Transverse colon (tissue), 4 donors: ENCODE measurements at regions of chr15 and their contacts with region 1.

Region 1: GRCh38 chr15:25022233-25022632 is 67.4 kb downstream of the SNRPN start:
- DNase-seq: no peak
- H3K4me3 ChIP-seq: no peak overlapping the region
- H3K27ac ChIP-seq: no peak overlapping the region
- H3K4me1 ChIP-seq: no peaks in the 10 kb centered on the region
- H3K27me3 ChIP-seq: no peaks in the 10 kb centered on the region
- CTCF ChIP-seq: no peak
- EP300 ChIP-seq: no peak
- POLR2A ChIP-seq: no peak

Region 2: DNA sequence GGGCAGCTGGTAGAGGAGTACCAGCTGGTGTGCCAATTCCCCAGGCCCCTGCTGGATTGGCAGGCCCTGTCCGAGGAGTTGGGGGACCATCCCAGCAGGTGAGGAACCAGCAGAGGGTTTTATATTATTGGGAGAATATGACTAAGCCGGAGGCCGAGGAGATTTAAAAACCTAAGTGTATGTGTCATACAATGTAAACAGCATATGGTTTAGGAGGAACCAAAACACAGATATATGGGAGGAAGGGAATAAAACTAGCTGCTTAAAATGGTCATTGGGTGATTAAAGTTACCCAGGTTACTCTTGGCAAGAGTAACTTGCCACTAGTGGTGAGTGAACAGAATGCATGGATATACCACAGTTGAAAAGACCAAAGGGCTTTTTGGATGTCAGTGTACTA is 45.3 kb before region 1 on chr15:
- in situ Hi-C with region 1: no loop called
- intact Hi-C with region 1: loop called (anchors 10 kb)
- DNase-seq: no peak
- H3K4me3 ChIP-seq: no peak overlapping the region
- H3K27ac ChIP-seq: no peak overlapping the region
- H3K4me1 ChIP-seq: no peaks in the 10 kb centered on the region
- H3K27me3 ChIP-seq: no peaks in the 10 kb centered on the region
- CTCF ChIP-seq: no peak
- EP300 ChIP-seq: no peak
- POLR2A ChIP-seq: no peak

Region 3: DNA sequence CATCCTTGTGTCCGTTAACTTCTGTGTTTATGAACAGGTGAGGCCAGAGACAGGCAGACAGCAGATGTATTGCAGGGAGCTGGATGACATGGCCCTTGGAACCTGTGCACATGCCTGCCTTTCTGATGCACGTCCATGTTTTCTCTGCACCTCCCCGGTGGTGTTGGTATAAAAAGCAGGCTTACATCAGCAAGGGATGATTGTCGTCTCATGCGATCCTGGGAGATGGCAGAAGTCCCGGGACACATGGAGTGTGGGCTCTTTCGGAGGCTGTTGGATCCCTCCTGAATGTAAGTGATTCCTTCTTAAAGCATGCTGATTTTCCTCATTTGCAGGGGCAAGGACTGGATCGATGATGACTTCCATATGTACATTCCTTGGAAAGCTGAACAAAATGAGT is 67.3 kb after region 1 on chr15:
- in situ Hi-C with region 1: no loop called
- intact Hi-C with region 1: loop called (anchors 10 kb)
- DNase-seq: no peak
- H3K4me3 ChIP-seq: no peak overlapping the region
- H3K27ac ChIP-seq: no peak overlapping the region
- H3K4me1 ChIP-seq: no peaks in the 10 kb centered on the region
- H3K27me3 ChIP-seq: no peaks in the 10 kb centered on the region
- CTCF ChIP-seq: no peak
- EP300 ChIP-seq: no peak
- POLR2A ChIP-seq: no peak

Region 4: DNA sequence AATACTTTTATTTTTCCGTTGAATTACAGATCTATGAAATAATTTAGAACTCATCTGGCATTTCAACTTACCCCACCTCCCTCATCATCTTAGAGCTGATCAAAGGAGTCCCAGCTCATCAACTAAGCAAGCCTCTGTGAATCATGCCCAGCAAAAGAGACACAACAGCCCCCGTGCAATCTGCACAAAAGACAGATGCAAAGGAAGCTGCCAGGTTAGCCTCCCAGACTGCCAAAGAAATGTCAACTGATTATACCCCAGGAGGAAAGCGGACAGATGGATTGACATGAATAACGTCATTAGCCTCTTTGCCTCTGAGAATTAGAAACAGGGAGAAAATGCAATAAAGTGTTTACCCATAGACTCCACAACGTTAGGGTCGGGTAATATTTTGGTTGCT is 1675.7 kb after region 1 on chr15:
- in situ Hi-C with region 1: no loop called
- intact Hi-C with region 1: no loop called
- DNase-seq: no peak
- H3K4me3 ChIP-seq: no peak overlapping the region
- H3K27ac ChIP-seq: no peak overlapping the region
- H3K4me1 ChIP-seq: no peaks in the 10 kb centered on the region
- H3K27me3 ChIP-seq: no peaks in the 10 kb centered on the region
- CTCF ChIP-seq: no peak
- EP300 ChIP-seq: no peak
- POLR2A ChIP-seq: no peak